Panc1 (cell line): ENCODE measurements at regions of chr15 and their contacts with region 1.

Region 1: GRCh38 chr15:46654993-46655392 is 1020.2 kb downstream of the SQOR start:
- DNase-seq: no peak
- ATAC-seq: no peak
- H3K4me3 ChIP-seq: no peak overlapping the region
- H3K27ac ChIP-seq: no peak overlapping the region
- H3K4me1 ChIP-seq: no peaks in the 10 kb centered on the region
- H3K27me3 ChIP-seq: no peaks in the 10 kb centered on the region
- CTCF ChIP-seq: no peak

Region 2: GRCh38 chr15:46714950-46715349 is 60.0 kb after region 1 on chr15:
- CTCF ChIA-PET with region 1: no interaction called
- POLR2A ChIA-PET with region 1: no interaction called
- in situ Hi-C with region 1: no loop called
- intact Hi-C with region 1: loop called (anchors 10 kb)
- DNase-seq: no peak
- ATAC-seq: no peak
- H3K4me3 ChIP-seq: no peak overlapping the region
- H3K27ac ChIP-seq: no peak overlapping the region
- H3K4me1 ChIP-seq: no peaks in the 10 kb centered on the region
- H3K27me3 ChIP-seq: no peaks in the 10 kb centered on the region
- CTCF ChIP-seq: no peak